ENCODE measurements at regions of chr1 and their contacts with region 1.

Region 1: GRCh38 chr1:241902391-241903065 is 54.5 kb downstream of the EXO1 start:
- DNase-seq: no peak
- ATAC-seq: no peak
- H3K4me3 ChIP-seq: no peak overlapping the region
- H3K27ac ChIP-seq: no peak overlapping the region
- H3K4me1 ChIP-seq: no peaks in the 10 kb centered on the region
- H3K27me3 ChIP-seq: no peaks in the 10 kb centered on the region
- CTCF ChIP-seq: no peak

Region 2: DNA sequence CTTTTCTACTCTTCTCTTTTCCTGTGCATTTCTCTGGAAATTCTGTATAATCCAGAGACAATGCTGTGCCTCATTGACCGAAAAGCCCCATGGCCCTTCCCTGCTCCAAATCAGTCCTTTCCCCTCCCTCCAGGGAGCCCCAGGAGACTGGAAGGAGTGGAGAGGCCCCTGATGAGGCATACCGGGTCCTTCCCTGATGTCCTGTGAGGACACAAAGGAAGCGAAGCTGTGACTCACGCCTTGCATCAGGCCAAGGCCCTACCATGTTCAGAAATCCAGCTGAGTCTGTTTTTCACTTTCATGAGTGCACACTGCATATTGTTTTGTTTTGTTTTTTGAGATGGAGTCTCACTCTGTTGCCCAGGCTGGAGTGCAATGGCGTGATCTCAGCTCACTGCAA is 16.4 kb after region 1 on chr1:
- CTCF ChIA-PET with region 1: no interaction called
- POLR2A ChIA-PET with region 1: no interaction called
- in situ Hi-C with region 1: no loop called
- intact Hi-C with region 1: no loop called
- DNase-seq: no peak
- ATAC-seq: no peak
- H3K4me3 ChIP-seq: no peak overlapping the region
- H3K27ac ChIP-seq: no peak overlapping the region
- H3K4me1 ChIP-seq: no peaks in the 10 kb centered on the region
- H3K27me3 ChIP-seq: no peaks in the 10 kb centered on the region
- CTCF ChIP-seq: no peak

Region 3: GRCh38 chr1:241947354-241947753 is 44.8 kb after region 1 on chr1:
- CTCF ChIA-PET with region 1: no interaction called
- POLR2A ChIA-PET with region 1: no interaction called
- in situ Hi-C with region 1: no loop called
- intact Hi-C with region 1: no loop called
- DNase-seq: no peak
- ATAC-seq: no peak
- H3K4me3 ChIP-seq: no peak overlapping the region
- H3K27ac ChIP-seq: no peak overlapping the region
- H3K4me1 ChIP-seq: peaks cover 5% of the 10 kb centered on the region
- H3K27me3 ChIP-seq: no peaks in the 10 kb centered on the region
- CTCF ChIP-seq: no peak

Region 4: GRCh38 chr1:242089911-242090310 is 187.4 kb after region 1 on chr1:
- CTCF ChIA-PET with region 1: interaction called, 12 read pairs
- POLR2A ChIA-PET with region 1: no interaction called
- in situ Hi-C with region 1: no loop called
- intact Hi-C with region 1: no loop called
- DNase-seq: no peak
- ATAC-seq: no peak
- H3K4me3 ChIP-seq: no peak overlapping the region
- H3K27ac ChIP-seq: no peak overlapping the region
- H3K4me1 ChIP-seq: no peaks in the 10 kb centered on the region; the same call in 1 of the 2 replicates
- H3K27me3 ChIP-seq: no peaks in the 10 kb centered on the region
- CTCF ChIP-seq: no peak

Measured in Panc1 (cell line).